Heart right ventricle (tissue), 16 donors: ENCODE measurements at regions of chr14 and their contacts with region 1.

Region 1: DNA sequence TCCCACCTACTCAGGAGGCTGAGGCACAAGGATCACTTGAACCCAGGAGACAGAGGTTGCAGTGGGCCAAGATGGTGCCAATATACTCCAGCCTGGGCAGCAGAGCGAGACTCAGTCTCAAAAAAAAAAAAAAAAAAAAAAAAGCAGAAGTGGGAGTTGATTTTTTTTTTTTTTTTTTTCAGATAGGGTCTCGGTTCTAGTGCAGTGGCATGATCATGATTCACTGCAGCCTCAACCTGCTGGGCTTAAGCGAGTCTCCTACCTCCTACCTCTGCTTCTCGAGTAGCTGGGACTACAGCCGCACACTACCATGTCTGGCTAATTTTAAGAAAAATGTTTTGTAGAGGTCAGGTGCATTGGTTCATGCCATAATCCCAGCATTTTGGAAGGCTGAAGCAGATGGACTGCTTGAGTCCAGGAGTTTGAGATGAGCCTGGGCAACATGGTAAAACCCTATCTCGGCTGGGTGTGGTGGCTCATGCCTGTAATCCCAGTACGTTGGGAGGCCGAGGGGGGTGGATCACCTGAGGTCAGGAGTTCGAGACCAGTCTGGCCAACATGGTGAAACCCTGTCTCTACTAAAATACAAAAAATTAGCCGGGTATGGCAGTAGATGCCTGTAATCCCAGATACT is 16.3 kb upstream of the HSP90AA1 start:
- DNase-seq: no peak
- ATAC-seq: no peak
- H3K4me3 ChIP-seq: no peak overlapping the region
- H3K27ac ChIP-seq: no peak overlapping the region
- H3K4me1 ChIP-seq: no peaks in the 10 kb centered on the region
- H3K27me3 ChIP-seq: no peaks in the 10 kb centered on the region
- CTCF ChIP-seq: no peak

Region 2: GRCh38 chr14:101707068-101707842 is 395.9 kb before region 1 on chr14:
- intact Hi-C with region 1: loop called in 4 of 10 experiments (anchors 5 to 10 kb)
- DNase-seq: peak in 1 of 2 donors; percentile 79
- ATAC-seq: peak; percentile 38 to 83 (median 64)
- H3K4me3 ChIP-seq: peak overlapping the region in 2 of 10 donors; percentile 1 to 25
- H3K27ac ChIP-seq: peak overlapping the region in 9 of 10 donors; percentile 71 to 90 (median 84)
- H3K4me1 ChIP-seq: peaks cover 10 to 33% (median 25%) of the 10 kb centered on the region in 9 donors
- H3K27me3 ChIP-seq: peaks cover 0 to 29% (median 5%) of the 10 kb centered on the region in 7 donors
- CTCF ChIP-seq: peak; percentile 72 to 90 (median 84)